ENCODE measurements at regions of chr15 and their contacts with region 1.

Region 1: DNA sequence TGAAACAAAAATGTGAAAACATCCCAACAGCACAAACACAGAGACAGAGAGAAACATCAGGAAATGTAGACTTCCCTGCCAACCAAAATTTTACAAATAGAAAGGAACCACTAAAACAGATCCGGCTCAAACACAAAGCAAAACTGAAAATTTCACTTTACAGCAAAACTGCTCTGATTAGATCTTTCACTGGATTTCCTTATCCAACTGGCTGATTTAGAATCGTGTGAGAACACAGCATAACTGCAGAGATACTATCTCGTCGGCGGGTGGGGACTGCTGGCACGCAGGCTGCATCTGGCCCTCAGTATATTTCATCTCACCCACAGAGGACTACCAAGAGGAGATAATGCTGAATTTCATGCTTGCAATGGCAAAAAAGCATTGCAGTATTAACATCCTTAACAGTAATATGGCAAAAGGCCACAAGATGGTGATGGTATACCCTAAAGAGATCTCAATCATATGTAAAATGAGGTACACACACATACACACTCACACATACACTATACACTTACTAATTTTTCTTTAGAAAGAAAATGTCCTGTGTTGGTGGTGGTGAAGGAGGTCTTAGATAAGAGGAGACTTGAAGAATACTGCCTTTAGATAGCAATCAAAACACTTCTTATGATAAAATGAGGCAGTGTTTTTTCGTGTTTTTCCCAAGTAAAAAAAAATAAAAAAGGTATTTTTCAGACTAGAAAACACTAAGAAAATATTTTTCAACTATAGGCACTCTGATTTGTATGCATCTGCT is 10.6 kb upstream of the LEO1 start:
- DNase-seq: peak; percentile 80
- H3K4me3 Mint-ChIP-seq: peak overlapping the region; percentile 70
- H3K27ac Mint-ChIP-seq: peak overlapping the region; percentile 93
- H3K4me1 Mint-ChIP-seq: peaks cover 17% of the 10 kb centered on the region
- H3K27me3 Mint-ChIP-seq: peaks cover 6% of the 10 kb centered on the region

Region 2: GRCh38 chr15:51341366-51342226 is 640.6 kb before region 1 on chr15 and contains the start of gene GLDN:
- CTCF ChIA-PET with region 1: no interaction called
- DNase-seq: no peak
- H3K4me3 Mint-ChIP-seq: no peak within 1 kb of the TSS
- H3K27ac Mint-ChIP-seq: no peak within 1 kb of the TSS
- H3K4me1 Mint-ChIP-seq: no peaks in the 10 kb centered on the region
- H3K27me3 Mint-ChIP-seq: peaks cover 40% of the 10 kb centered on the region

Region 3: GRCh38 chr15:51971375-51972133 is 10.6 kb before region 1 on chr15 and contains the start of gene LEO1:
- CTCF ChIA-PET with region 1: interaction called, 12 read pairs
- DNase-seq: peak; percentile 94
- H3K4me3 Mint-ChIP-seq: peak within 1 kb of the TSS; percentile 95
- H3K27ac Mint-ChIP-seq: peak within 1 kb of the TSS; percentile 93
- H3K4me1 Mint-ChIP-seq: peaks cover 27% of the 10 kb centered on the region
- H3K27me3 Mint-ChIP-seq: peaks cover 5% of the 10 kb centered on the region

Region 4: GRCh38 chr15:52139599-52140491 is 157.7 kb after region 1 on chr15:
- CTCF ChIA-PET with region 1: interaction called, 13 read pairs
- DNase-seq: peak; percentile 80
- H3K4me3 Mint-ChIP-seq: no peak overlapping the region
- H3K27ac Mint-ChIP-seq: peak overlapping the region; percentile 10
- H3K4me1 Mint-ChIP-seq: peaks cover 17% of the 10 kb centered on the region
- H3K27me3 Mint-ChIP-seq: no peaks in the 10 kb centered on the region

Region 5: GRCh38 chr15:52200831-52201365 is 218.7 kb after region 1 on chr15:
- CTCF ChIA-PET with region 1: no interaction called
- DNase-seq: no peak
- H3K4me3 Mint-ChIP-seq: no peak overlapping the region
- H3K27ac Mint-ChIP-seq: no peak overlapping the region
- H3K4me1 Mint-ChIP-seq: no peaks in the 10 kb centered on the region
- H3K27me3 Mint-ChIP-seq: peaks cover 11% of the 10 kb centered on the region